Activated naive CD4-positive, alpha-beta T cell treated with anti-CD3 and anti-CD28 coated beads for 36 hours (primary cell): ENCODE measurements at regions of chr6 and their contacts with region 1.

Region 1: GRCh38 chr6:41920921-41921711 is at the starts of genes BYSL and MED20:
- DNase-seq: peak; percentile 97
- H3K4me3 Mint-ChIP-seq: peak within 1 kb of the TSS; percentile 91
- H3K27ac Mint-ChIP-seq: peak within 1 kb of the TSS; percentile 97
- H3K4me1 Mint-ChIP-seq: peaks cover 54% of the 10 kb centered on the region
- H3K27me3 Mint-ChIP-seq: no peaks in the 10 kb centered on the region
- total RNA-seq, gene BYSL: 49.8 TPM
- total RNA-seq, gene MED20: 24.0 to 27.4 TPM

Region 2: DNA sequence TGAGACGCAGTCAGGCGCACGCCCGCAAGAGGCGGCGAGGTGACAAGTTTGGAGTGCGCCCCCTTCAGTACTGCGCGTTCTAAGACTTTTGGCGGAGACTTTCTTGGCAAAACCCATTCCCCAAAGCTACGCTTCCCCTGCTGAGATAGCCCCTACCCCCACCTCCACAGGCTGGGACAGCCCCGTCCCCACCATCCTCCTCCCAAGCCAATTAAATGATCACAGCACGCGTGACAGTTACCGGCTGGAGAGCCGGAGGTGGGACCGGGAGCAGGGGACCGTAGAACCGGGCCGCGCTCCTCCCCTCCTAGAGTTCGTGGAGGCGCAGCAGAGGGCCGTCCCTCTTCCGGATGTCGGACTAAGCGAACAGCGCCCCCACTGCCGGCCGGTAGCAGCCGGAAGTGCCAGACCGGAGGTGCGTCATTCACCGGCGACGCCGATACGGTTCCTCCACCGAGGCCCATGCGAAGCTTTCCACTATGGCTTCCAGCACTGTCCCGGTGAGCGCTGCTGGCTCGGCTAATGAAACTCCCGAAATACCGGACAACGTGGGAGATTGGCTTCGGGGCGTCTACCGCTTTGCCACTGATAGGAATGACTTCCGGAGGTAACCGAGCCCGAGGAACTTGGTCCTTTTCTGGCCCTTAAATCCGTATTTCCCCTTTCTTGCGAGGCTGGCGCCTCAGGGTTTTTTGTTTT is 133.7 kb before region 1 on chr6 and contains the start of gene TOMM6:
- CTCF ChIA-PET with region 1: interaction called, 9 read pairs
- intact Hi-C with region 1: loop called (anchors 1 kb)
- DNase-seq: peak; percentile 97
- H3K4me3 Mint-ChIP-seq: peak within 1 kb of the TSS; percentile 92
- H3K27ac Mint-ChIP-seq: peak within 1 kb of the TSS; percentile 94
- H3K4me1 Mint-ChIP-seq: peaks cover 24% of the 10 kb centered on the region
- H3K27me3 Mint-ChIP-seq: no peaks in the 10 kb centered on the region
- total RNA-seq, gene TOMM6: 285 to 299 TPM

Region 3: GRCh38 chr6:41859356-41859755 is 61.8 kb before region 1 on chr6:
- CTCF ChIA-PET with region 1: no interaction called
- intact Hi-C with region 1: no loop called
- DNase-seq: no peak
- H3K4me3 Mint-ChIP-seq: no peak overlapping the region
- H3K27ac Mint-ChIP-seq: no peak overlapping the region
- H3K4me1 Mint-ChIP-seq: no peaks in the 10 kb centered on the region
- H3K27me3 Mint-ChIP-seq: no peaks in the 10 kb centered on the region

Region 4: GRCh38 chr6:41895300-41896233 is 25.5 kb before region 1 on chr6 and contains the start of gene USP49:
- CTCF ChIA-PET with region 1: interaction called, 5 read pairs
- intact Hi-C with region 1: loop called (anchors 1 kb)
- DNase-seq: peak; percentile 93
- H3K4me3 Mint-ChIP-seq: no peak within 1 kb of the TSS
- H3K27ac Mint-ChIP-seq: peak within 1 kb of the TSS; percentile 91
- H3K4me1 Mint-ChIP-seq: peaks cover 11% of the 10 kb centered on the region
- H3K27me3 Mint-ChIP-seq: no peaks in the 10 kb centered on the region
- total RNA-seq, gene USP49: 8.3 to 8.4 TPM

Region 5: DNA sequence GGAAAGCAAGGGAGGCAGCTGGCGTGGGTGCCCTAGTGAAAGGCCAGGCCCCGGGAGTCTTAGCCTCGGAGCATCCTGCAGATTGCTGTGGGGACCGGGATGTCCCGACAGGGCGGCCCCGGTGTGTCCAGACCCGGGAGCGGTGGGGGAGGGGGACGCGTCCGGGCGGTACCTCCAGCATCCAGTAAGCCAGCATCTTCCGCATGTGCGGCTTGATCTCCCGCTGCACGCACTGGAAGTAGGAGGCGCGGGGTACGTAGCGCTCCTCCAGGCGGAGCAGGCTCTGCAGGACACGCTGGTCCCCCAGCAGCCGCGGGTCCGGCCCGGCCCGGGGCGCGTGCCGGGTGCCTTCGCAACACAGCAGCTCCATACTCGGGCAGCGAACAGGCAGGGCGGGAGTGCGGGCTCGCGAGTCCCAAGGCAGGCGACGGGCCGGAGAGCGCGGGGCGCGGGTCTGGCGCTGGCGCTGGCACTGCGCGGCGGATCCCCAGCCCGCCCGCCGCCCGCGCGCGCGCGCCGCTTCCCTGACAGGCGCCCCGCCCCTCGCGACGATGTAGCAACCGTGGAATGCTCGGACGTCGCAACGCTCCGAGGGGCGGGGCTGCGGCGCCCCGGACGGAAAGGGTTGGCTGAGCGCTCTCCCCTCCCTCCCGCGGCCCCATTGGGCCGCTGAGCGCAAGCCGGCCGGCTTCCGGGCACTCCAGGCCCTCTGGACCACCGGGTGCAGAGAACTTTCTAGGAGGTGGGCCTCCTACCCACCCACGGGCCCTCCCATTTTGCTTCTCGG is 20.4 kb after region 1 on chr6 and contains the start of gene CCND3:
- CTCF ChIA-PET with region 1: interaction called, 105 read pairs
- intact Hi-C with region 1: loop called (anchors 1 kb)
- DNase-seq: peak; percentile 93
- H3K4me3 Mint-ChIP-seq: peak within 1 kb of the TSS; percentile 100
- H3K27ac Mint-ChIP-seq: peak within 1 kb of the TSS; percentile 99
- H3K4me1 Mint-ChIP-seq: peaks cover 47% of the 10 kb centered on the region
- H3K27me3 Mint-ChIP-seq: no peaks in the 10 kb centered on the region
- total RNA-seq, gene CCND3: 1,152 to 1,165 TPM

Region 6: DNA sequence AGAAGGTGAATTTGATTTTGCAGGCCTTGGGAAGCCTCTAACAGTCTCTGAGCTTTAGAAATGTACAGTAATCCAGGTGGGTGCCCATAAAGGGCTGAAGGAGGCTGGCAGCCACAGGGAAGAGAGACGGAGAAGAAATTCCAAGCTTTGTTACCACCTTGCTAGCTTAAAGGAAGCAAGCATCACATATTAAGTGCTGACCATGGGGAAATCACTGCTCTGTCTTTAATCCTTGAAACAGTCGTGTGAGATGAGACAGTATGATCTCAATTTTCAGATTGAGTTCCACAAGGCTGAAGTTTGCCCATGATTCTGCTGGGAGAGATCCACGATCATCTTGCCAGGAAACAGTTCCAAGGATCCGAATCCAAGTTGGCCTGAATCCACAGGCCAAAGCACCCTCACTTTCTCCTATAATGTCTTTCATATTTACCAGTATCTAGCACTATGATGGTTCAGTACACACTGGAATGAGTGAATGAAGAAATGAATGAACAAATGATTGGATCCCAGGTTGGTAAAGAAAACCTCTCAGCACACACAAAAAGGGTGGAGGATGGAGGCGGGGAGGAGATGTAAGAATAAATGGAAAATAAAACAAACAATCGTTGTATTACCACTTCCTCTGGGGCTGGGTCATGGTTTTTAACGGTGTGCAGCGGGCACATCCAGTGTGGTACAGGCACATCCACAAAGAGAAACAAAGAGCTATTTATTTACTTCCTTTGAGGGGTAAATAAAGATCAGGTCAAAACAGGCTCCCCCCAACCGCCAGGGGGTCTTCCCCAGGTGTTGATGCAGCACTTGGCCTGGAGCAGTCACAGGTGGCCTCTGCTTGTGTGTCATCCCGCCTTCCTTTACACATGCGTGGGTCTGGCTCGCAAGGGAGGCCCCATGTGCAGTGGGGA is 101.0 kb after region 1 on chr6:
- CTCF ChIA-PET with region 1: interaction called, 4 read pairs
- intact Hi-C with region 1: loop called (anchors 1 kb)
- DNase-seq: peak; percentile 91
- H3K4me3 Mint-ChIP-seq: peak overlapping the region; percentile 63
- H3K27ac Mint-ChIP-seq: peak overlapping the region; percentile 99
- H3K4me1 Mint-ChIP-seq: peaks cover 89% of the 10 kb centered on the region
- H3K27me3 Mint-ChIP-seq: no peaks in the 10 kb centered on the region